Caco-2 (cell line): ENCODE measurements at regions of chr7 and their contacts with region 1.

Region 1: DNA sequence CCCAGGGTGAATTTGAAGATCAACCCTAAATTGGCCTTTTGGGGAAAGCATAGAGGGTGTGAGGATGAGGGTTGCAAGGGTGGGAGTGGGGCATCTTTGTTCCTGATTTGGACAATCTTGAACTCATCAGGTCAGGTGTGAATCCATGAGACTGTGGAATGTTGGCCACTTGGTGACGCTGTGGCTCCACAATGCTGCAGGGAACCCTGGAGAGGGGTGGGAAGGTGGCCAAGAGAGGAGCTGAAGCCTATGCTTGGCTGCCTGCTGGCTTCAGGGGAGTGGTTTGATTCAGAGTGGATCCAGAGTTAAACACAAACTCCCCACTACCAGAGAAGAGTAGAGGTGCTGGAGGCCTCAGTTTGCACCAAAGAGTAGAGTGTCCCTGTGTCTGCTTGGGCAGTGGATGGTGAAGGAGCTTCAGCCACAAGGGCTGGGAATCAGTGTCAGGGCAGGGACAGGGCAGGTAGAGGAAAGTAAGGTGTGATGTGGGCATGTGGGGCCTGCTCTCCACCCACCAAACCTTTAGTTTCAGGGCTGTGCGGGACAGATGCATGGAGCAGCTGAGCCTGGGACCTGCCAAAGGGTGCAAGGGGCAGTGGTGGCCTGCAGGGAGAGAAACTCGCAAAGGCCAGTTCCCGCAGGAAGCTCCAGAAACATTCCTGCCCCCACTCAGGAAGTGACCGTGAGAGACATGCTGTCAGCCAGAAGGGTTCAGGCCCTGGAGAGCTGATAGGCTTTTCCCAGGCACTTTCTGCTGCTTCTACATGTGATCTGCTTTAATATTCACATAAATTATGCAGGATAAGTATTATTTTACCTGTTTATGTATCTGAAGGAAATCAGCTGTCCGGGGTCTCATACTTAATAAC is 81.0 kb upstream of the PRSS58 start:
- DNase-seq: peak in 1 of 2 experiments; percentile 35
- H3K4me3 ChIP-seq: no peak overlapping the region
- H3K4me3 Mint-ChIP-seq: no peak overlapping the region
- H3K27ac Mint-ChIP-seq: no peak overlapping the region
- H3K4me1 ChIP-seq: no peaks in the 10 kb centered on the region
- H3K4me1 Mint-ChIP-seq: no peaks in the 10 kb centered on the region
- H3K27me3 ChIP-seq: no peaks in the 10 kb centered on the region; the same call in 1 of the 2 replicates
- H3K27me3 Mint-ChIP-seq: peaks cover 23% of the 10 kb centered on the region
- CTCF ChIP-seq: peak in 1 of 2 experiments; percentile 48

Region 2: GRCh38 chr7:142308918-142309317 is 29.9 kb before region 1 on chr7:
- CTCF ChIA-PET with region 1: no interaction called
- POLR2A ChIA-PET with region 1: no interaction called
- intact Hi-C with region 1: loop called (anchors 1 kb)
- DNase-seq: no peak
- H3K4me3 ChIP-seq: no peak overlapping the region
- H3K4me3 Mint-ChIP-seq: no peak overlapping the region
- H3K27ac Mint-ChIP-seq: no peak overlapping the region
- H3K4me1 ChIP-seq: no peaks in the 10 kb centered on the region
- H3K4me1 Mint-ChIP-seq: no peaks in the 10 kb centered on the region
- H3K27me3 ChIP-seq: no peaks in the 10 kb centered on the region
- H3K27me3 Mint-ChIP-seq: peaks cover 18% of the 10 kb centered on the region
- CTCF ChIP-seq: no peak